ENCODE measurements at regions of chr1 and their contacts with region 1.

Region 1: DNA sequence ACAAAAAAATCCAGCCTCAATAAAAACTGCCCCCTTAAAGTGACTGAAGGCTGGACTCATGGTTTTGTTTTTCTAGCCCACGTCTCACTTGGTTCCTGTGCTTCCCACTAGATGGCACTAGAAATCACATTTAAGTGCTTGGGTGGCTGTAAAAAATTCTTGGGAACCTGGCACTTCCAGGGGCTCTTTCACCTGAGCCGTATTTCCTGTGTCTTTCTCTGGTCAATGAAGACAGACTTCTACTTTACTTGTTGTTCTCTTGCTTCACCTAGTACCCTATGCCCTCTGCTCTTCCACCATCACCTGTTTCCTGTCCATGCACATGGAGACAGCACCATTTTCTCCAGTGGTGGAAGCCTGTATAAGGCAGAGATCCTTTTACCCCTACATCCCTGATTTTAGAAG is 20.0 kb downstream of the METTL13 start:
- DNase-seq: peak; percentile 35
- H3K4me3 ChIP-seq: no peak overlapping the region
- H3K27ac ChIP-seq: no peak overlapping the region
- H3K4me1 ChIP-seq: no peaks in the 10 kb centered on the region
- H3K27me3 ChIP-seq: no peaks in the 10 kb centered on the region
- CTCF ChIP-seq: peak; percentile 76 to 86

Region 2: DNA sequence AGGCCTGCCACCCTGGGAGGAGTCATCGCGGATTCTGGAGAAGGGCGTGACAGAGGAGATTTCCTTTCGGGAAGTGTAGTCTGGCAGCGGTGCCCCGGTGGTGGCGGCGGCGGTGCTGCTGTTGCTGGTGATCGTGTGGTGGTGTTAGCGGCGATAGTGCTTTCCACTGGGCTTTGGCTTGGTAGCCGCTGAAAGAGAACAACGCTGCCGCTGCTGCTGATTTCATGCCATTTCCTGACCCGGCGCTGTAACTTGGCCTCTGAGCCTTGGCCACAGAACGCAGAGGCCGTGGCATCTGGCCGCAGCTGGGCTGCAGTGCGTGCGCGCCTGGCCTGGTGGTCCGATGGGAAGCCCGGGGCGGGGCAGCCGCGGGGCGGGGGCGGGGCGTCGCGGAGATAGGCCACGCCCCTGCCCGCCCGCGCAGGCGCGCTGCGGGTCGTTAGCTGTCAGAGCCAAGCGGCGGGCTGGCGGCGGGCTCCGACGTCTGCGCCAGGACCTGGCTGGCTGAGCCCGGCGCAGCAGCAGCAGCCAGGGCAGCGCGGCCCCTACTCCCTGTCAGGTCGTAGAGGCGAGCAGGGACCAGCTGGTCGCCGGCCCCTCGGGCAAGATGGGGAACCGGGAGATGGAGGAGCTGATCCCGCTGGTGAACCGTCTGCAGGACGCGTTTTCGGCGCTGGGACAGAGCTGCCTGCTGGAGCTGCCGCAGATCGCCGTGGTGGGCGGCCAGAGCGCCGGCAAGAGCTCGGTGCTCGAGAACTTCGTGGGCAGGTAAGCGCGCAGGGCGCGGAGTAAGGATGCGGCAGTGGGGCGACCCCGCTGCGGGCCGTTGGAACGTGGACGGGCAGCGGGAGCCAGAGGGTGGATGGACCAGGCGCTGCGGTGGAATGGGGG is 39.8 kb after region 1 on chr1 and contains the start of gene DNM3:
- CTCF ChIA-PET with region 1: interaction called, 3 read pairs
- dilution Hi-C with region 1: no loop called
- in situ Hi-C with region 1: no loop called
- intact Hi-C with region 1: loop called (anchors 1 kb)
- DNase-seq: peak; percentile 72
- H3K4me3 ChIP-seq: peak within 1 kb of the TSS; percentile 71 to 100 (median 86)
- H3K27ac ChIP-seq: peak within 1 kb of the TSS; percentile 35
- H3K4me1 ChIP-seq: peaks cover 14% of the 10 kb centered on the region
- H3K27me3 ChIP-seq: no peaks in the 10 kb centered on the region
- CTCF ChIP-seq: no peak
- total RNA-seq, gene DNM3: 3.0 to 6.4 TPM

Region 3: DNA sequence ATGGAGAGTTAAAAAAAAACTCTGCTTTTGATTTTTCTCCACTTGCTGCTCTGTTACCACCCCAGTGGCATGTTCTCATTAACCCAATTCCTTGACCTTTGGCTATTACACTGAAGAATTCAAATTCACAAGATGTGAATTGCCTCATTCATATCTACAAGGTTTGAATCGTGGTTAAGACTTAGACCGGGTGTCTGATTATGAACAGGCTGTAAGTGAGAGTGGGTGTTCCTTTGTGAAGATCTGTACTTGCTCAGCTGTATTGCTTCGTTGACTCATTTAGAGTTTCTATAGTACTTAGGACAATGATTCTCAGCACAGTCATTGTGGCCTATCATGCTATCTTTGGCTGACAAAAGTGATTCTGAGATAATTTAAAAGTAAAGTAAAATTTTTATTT is 76.2 kb after region 1 on chr1:
- CTCF ChIA-PET with region 1: no interaction called
- dilution Hi-C with region 1: no loop called
- in situ Hi-C with region 1: no loop called
- intact Hi-C with region 1: no loop called
- DNase-seq: peak; percentile 88
- H3K4me3 ChIP-seq: no peak overlapping the region
- H3K27ac ChIP-seq: no peak overlapping the region
- H3K4me1 ChIP-seq: no peaks in the 10 kb centered on the region
- H3K27me3 ChIP-seq: no peaks in the 10 kb centered on the region
- CTCF ChIP-seq: no peak

Region 4: GRCh38 chr1:171890131-171890530 is 88.6 kb after region 1 on chr1:
- CTCF ChIA-PET with region 1: no interaction called
- dilution Hi-C with region 1: no loop called
- in situ Hi-C with region 1: no loop called
- intact Hi-C with region 1: no loop called
- DNase-seq: no peak
- H3K4me3 ChIP-seq: no peak overlapping the region
- H3K27ac ChIP-seq: no peak overlapping the region
- H3K4me1 ChIP-seq: no peaks in the 10 kb centered on the region
- H3K27me3 ChIP-seq: no peaks in the 10 kb centered on the region
- CTCF ChIP-seq: no peak

Region 5: GRCh38 chr1:171901245-171901644 is 99.8 kb after region 1 on chr1:
- CTCF ChIA-PET with region 1: no interaction called
- dilution Hi-C with region 1: no loop called
- in situ Hi-C with region 1: no loop called
- intact Hi-C with region 1: loop called (anchors 10 kb)
- DNase-seq: no peak
- H3K4me3 ChIP-seq: no peak overlapping the region
- H3K27ac ChIP-seq: no peak overlapping the region
- H3K4me1 ChIP-seq: peaks cover 32% of the 10 kb centered on the region
- H3K27me3 ChIP-seq: no peaks in the 10 kb centered on the region
- CTCF ChIP-seq: no peak

Measured in mammary epithelial cell (primary cell).